ENCODE measurements at regions of chr16 and their contacts with region 1.

Region 1: GRCh38 chr16:71746442-71747046 is 22.0 kb upstream of the PHLPP2 start:
- DNase-seq: no peak
- ATAC-seq: no peak
- H3K4me3 ChIP-seq: no peak overlapping the region
- H3K27ac ChIP-seq: no peak overlapping the region
- H3K4me1 ChIP-seq: peaks cover 0 to 5% (median 0%) of the 10 kb centered on the region in 12 donors
- H3K27me3 ChIP-seq: no peaks in the 10 kb centered on the region
- CTCF ChIP-seq: peak; percentile 55 to 81 (median 66)
- POLR2A ChIP-seq: no peak

Region 2: GRCh38 chr16:71726476-71727315 is 19.8 kb before region 1 on chr16:
- intact Hi-C with region 1: loop called in 1 of 10 experiments (anchors 2 kb)
- DNase-seq: no peak
- ATAC-seq: no peak
- H3K4me3 ChIP-seq: no peak overlapping the region
- H3K27ac ChIP-seq: peak overlapping the region in 5 of 12 donors; percentile 13 to 67 (median 15)
- H3K4me1 ChIP-seq: peaks cover 0 to 43% (median 19%) of the 10 kb centered on the region in 12 donors
- H3K27me3 ChIP-seq: no peaks in the 10 kb centered on the region
- CTCF ChIP-seq: no peak
- POLR2A ChIP-seq: no peak

Measured in heart left ventricle (tissue), 16 donors.